Calu3 (cell line): ENCODE measurements at regions of chr7 and their contacts with region 1.

Region 1: DNA sequence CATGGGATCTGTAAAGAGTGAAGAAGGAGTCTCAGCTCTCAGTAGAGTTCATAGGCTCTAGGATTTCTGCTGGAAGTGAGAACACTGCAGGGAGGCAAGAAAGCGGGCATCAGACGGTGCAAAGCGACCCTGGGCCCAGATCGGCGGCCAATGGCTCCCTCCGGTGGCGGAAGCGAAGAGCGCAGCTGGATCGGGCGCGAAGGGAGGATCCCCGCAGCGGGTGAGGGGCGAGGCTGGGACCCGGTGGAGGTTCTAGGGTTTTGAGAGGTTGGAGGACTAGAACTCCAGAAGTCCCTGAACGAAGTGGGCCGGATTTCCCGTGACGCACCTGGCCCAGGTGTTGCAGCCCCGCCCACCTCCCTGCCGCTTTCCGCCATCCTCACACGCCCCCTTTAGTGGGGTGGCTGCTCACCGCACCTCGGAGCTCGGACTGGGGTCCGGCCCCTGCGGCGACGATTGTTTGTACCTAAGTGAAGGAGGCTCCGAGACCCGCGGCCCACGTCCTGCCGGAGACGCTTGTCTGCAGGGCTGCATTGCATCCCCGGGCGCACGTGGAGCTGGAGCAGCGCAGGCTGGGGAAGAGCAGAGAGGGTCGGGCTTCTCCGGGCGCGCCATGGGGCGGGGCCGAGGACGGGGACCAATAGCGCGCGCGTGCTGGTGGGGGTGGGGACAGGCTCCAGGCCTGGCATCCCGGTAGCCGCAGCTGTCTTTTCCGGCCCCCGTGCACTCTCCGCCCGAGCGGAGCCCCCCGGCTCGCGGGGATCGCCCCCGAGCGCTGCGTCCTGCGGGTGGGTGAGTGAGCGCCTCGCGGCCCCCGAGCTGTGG is at the start of gene SLC12A9:
- DNase-seq: peak; percentile 87
- H3K4me3 Mint-ChIP-seq: peak within 1 kb of the TSS; percentile 85
- H3K27ac Mint-ChIP-seq: peak within 1 kb of the TSS; percentile 75
- H3K4me1 Mint-ChIP-seq: peaks cover 5% of the 10 kb centered on the region
- H3K27me3 Mint-ChIP-seq: no peaks in the 10 kb centered on the region
- CTCF ChIP-seq: peak; percentile 59
- total RNA-seq, gene SLC12A9: 29.9 and 36.6 TPM in 2 replicates

Region 2: GRCh38 chr7:100803398-100804233 is 48.6 kb before region 1 on chr7:
- CTCF ChIA-PET with region 1: interaction called, 9 read pairs
- intact Hi-C with region 1: loop called (anchors 2 kb)
- DNase-seq: peak; percentile 64
- H3K4me3 Mint-ChIP-seq: peak overlapping the region; percentile 11
- H3K27ac Mint-ChIP-seq: peak overlapping the region; percentile 76
- H3K4me1 Mint-ChIP-seq: peaks cover 42% of the 10 kb centered on the region
- H3K27me3 Mint-ChIP-seq: no peaks in the 10 kb centered on the region
- CTCF ChIP-seq: no peak

Region 3: GRCh38 chr7:100888988-100889760 is 36.9 kb after region 1 on chr7 and contains the start of gene UFSP1:
- CTCF ChIA-PET with region 1: no interaction called
- intact Hi-C with region 1: no loop called
- DNase-seq: no peak
- H3K4me3 Mint-ChIP-seq: peak within 1 kb of the TSS; percentile 67
- H3K27ac Mint-ChIP-seq: peak within 1 kb of the TSS; percentile 61
- H3K4me1 Mint-ChIP-seq: peaks cover 18% of the 10 kb centered on the region
- H3K27me3 Mint-ChIP-seq: no peaks in the 10 kb centered on the region
- CTCF ChIP-seq: no peak
- total RNA-seq, gene UFSP1: 3.3 and 4.2 TPM in 2 replicates